ENCODE measurements at regions of chr16 and their contacts with region 1.

Region 1: GRCh38 chr16:56317998-56318826 is 107.1 kb downstream of the AMFR start:
- DNase-seq: peak; percentile 42 to 84 (median 69)
- ATAC-seq: peak; percentile 92 to 96 (median 93)
- H3K4me3 ChIP-seq: peak overlapping the region in 1 of 2 donors; percentile 8
- H3K4me3 Mint-ChIP-seq: peak overlapping the region; percentile 34 to 64 (median 34)
- H3K27ac ChIP-seq: no peak overlapping the region
- H3K27ac Mint-ChIP-seq: no peak overlapping the region
- H3K4me1 ChIP-seq: peaks cover 0 to 9% of the 10 kb centered on the region in 2 experiments
- H3K4me1 Mint-ChIP-seq: peaks cover 6 to 10% (median 6%) of the 10 kb centered on the region in 3 donors
- H3K27me3 ChIP-seq: peaks cover 0 to 10% of the 10 kb centered on the region in 2 experiments
- H3K27me3 Mint-ChIP-seq: peaks cover 0 to 3% of the 10 kb centered on the region in 2 donors

Region 2: DNA sequence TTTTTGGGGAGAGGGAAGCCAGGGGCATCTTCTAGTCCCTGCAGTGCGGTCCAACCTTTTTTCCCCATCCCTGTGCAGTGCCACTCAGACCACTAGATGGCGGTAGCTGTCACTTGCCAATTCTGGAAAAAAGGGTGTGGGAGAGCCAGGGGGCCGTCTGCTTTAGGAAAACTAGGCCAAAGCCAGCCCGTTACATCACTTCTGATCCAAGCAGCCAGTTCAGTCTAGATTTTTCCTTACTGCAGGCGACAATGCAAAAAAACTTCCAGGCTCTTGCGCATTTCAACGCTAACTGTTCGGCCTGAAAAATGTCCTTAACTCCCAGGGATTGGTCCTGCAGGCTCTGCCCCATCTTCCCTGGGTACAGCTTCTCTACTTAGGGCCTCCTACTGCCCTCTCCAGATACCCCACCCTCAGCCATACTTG is 373.8 kb before region 1 on chr16:
- CTCF ChIA-PET with region 1: interaction called, 6 to 28 read pairs
- POLR2A ChIA-PET with region 1: no interaction called
- DNase-seq: peak in 27 of 35 experiments; percentile 3 to 67 (median 27)
- ATAC-seq: peak in 1 of 4 experiments; percentile 65
- H3K4me3 ChIP-seq: no peak overlapping the region
- H3K4me3 Mint-ChIP-seq: no peak overlapping the region
- H3K27ac ChIP-seq: no peak overlapping the region
- H3K27ac Mint-ChIP-seq: no peak overlapping the region
- H3K4me1 ChIP-seq: peaks cover 0 to 4% of the 10 kb centered on the region in 2 experiments
- H3K4me1 Mint-ChIP-seq: no peaks in the 10 kb centered on the region
- H3K27me3 ChIP-seq: peaks cover 0 to 16% of the 10 kb centered on the region in 2 experiments
- H3K27me3 Mint-ChIP-seq: peaks cover 46 to 57% of the 10 kb centered on the region in 2 donors

Region 3: GRCh38 chr16:56041686-56042085 is 276.5 kb before region 1 on chr16:
- CTCF ChIA-PET with region 1: interaction called in 1 of 2 experiments, 11 read pairs
- POLR2A ChIA-PET with region 1: no interaction called
- DNase-seq: peak in 17 of 35 experiments; percentile 1 to 57 (median 7)
- ATAC-seq: peak in 3 of 4 experiments; percentile 47 to 58 (median 50)
- H3K4me3 ChIP-seq: no peak overlapping the region
- H3K4me3 Mint-ChIP-seq: no peak overlapping the region
- H3K27ac ChIP-seq: no peak overlapping the region
- H3K27ac Mint-ChIP-seq: no peak overlapping the region
- H3K4me1 ChIP-seq: no peaks in the 10 kb centered on the region
- H3K4me1 Mint-ChIP-seq: no peaks in the 10 kb centered on the region
- H3K27me3 ChIP-seq: peaks cover 0 to 3% of the 10 kb centered on the region in 2 experiments
- H3K27me3 Mint-ChIP-seq: peaks cover 24 to 29% of the 10 kb centered on the region in 2 donors

Measured in T-cell (primary cell).